ENCODE measurements at regions of chr20 and their contacts with region 1.

Region 1: GRCh38 chr20:36666181-36666740 is 20.3 kb upstream of the SLA2 start:
- DNase-seq: peak; percentile 15
- ATAC-seq: peak; percentile 40; the same call in 1 of the 2 replicates
- H3K4me3 ChIP-seq: no peak overlapping the region
- H3K27ac ChIP-seq: no peak overlapping the region
- H3K4me1 ChIP-seq: no peaks in the 10 kb centered on the region
- H3K27me3 ChIP-seq: no peaks in the 10 kb centered on the region
- CTCF ChIP-seq: no peak; the same call in 1 of the 2 replicates

Region 2: DNA sequence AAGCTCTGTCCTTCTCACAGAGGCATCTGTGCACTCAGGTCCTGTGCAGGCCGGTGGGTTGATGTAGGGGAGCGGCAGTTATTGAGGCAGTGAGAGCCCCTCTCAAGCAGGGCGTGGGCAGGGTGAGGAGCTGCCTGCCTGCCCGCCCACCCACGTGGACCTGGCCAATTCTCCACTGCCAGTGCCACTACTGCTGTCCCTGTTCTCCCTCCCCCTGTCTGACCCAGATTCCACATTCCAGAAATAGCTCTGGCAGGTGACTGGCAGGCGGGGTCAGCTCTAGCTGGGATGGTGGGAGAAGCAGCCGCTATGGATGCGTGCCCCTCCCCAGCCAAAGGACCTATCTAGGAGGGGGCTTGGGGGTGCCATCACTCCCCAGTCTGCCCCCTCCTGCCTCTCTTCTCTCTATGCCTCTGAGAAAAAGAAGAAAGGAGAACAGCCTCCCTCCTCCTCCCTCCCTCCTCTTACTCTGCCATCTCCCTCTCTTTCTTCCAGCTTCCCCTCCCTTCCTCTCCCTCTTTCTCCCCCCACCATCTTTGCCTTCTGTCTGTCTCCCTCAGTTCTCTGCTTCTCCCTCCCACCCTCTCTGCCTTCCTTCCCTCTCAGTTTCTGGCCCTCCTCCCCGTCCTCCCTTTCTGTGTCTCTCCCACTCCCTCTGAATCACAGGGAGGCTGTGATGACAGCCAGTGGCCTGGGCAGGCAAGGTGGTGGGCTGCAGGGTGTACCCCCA is 211.4 kb before region 1 on chr20:
- CTCF ChIA-PET with region 1: no interaction called
- POLR2A ChIA-PET with region 1: interaction called, 12 read pairs
- intact Hi-C with region 1: no loop called
- DNase-seq: peak; percentile 17
- ATAC-seq: peak; percentile 59
- H3K4me3 ChIP-seq: no peak overlapping the region
- H3K27ac ChIP-seq: no peak overlapping the region
- H3K4me1 ChIP-seq: no peaks in the 10 kb centered on the region
- H3K27me3 ChIP-seq: no peaks in the 10 kb centered on the region
- CTCF ChIP-seq: no peak

Region 3: GRCh38 chr20:36613974-36614373 is 52.3 kb before region 1 on chr20:
- CTCF ChIA-PET with region 1: interaction called, 10 read pairs
- POLR2A ChIA-PET with region 1: no interaction called
- intact Hi-C with region 1: no loop called
- DNase-seq: peak; percentile 71
- ATAC-seq: peak; percentile 77
- H3K4me3 ChIP-seq: no peak overlapping the region
- H3K27ac ChIP-seq: no peak overlapping the region
- H3K4me1 ChIP-seq: peaks cover 12% of the 10 kb centered on the region; the same call in 1 of the 2 replicates
- H3K27me3 ChIP-seq: no peaks in the 10 kb centered on the region
- CTCF ChIP-seq: no peak

Region 4: GRCh38 chr20:36642136-36642535 is 24.1 kb before region 1 on chr20:
- CTCF ChIA-PET with region 1: no interaction called
- POLR2A ChIA-PET with region 1: no interaction called
- intact Hi-C with region 1: no loop called
- DNase-seq: no peak
- ATAC-seq: no peak
- H3K4me3 ChIP-seq: no peak overlapping the region
- H3K27ac ChIP-seq: peak overlapping the region; percentile 64
- H3K4me1 ChIP-seq: peaks cover 12% of the 10 kb centered on the region
- H3K27me3 ChIP-seq: no peaks in the 10 kb centered on the region
- CTCF ChIP-seq: no peak

Region 5: DNA sequence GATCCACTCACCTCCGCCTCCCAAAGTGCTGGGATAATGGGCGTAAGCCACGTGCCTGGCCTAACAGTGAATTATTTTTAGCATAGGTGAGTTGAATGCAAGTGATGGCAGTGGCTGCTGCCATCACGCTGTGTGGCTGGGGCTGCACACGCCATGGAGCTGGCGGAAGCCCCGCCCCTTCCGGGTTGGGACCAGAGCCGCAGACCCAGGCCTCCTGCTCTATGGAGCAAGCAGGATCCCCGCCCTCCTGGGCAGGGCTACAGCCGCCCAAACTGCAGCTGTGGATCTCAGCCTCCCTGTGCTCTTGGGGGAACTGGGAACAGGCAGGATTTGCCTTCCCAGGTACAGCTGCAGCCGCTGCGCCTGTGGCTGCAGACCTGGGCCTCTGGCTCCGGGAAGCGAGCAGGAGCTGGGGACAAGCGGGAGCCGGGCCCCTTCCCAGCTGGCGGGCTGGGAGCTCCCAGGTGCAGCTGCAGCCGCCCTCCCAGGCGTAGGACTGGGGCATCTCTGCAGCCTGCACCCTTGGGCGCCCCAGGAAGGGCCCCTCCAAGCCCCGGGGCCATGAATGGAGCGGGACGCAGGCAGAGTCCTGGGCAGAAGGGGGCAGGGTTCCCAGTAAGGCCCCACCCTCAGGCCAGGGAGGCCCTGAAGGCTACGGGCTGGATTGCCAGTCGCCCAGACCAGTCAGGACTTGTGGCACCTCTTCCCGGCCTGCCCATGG is 10.6 kb after region 1 on chr20:
- CTCF ChIA-PET with region 1: no interaction called
- POLR2A ChIA-PET with region 1: no interaction called
- intact Hi-C with region 1: no loop called
- DNase-seq: no peak
- ATAC-seq: no peak
- H3K4me3 ChIP-seq: no peak overlapping the region
- H3K27ac ChIP-seq: no peak overlapping the region
- H3K4me1 ChIP-seq: no peaks in the 10 kb centered on the region
- H3K27me3 ChIP-seq: no peaks in the 10 kb centered on the region
- CTCF ChIP-seq: no peak

Region 6: GRCh38 chr20:36745927-36746659 is 79.8 kb after region 1 on chr20 and contains the start of gene NDRG3:
- CTCF ChIA-PET with region 1: no interaction called
- POLR2A ChIA-PET with region 1: interaction called, 12 read pairs
- intact Hi-C with region 1: no loop called
- DNase-seq: peak; percentile 94
- ATAC-seq: peak; percentile 94
- H3K4me3 ChIP-seq: peak within 1 kb of the TSS; percentile 86
- H3K27ac ChIP-seq: peak within 1 kb of the TSS; percentile 34
- H3K4me1 ChIP-seq: peaks cover 7% of the 10 kb centered on the region; the same call in 1 of the 2 replicates
- H3K27me3 ChIP-seq: no peaks in the 10 kb centered on the region
- CTCF ChIP-seq: no peak
- total RNA-seq, gene NDRG3: 27.0 and 30.1 TPM in 2 replicates

Region 7: GRCh38 chr20:36754656-36755222 is 88.5 kb after region 1 on chr20:
- CTCF ChIA-PET with region 1: interaction called, 4 read pairs
- POLR2A ChIA-PET with region 1: interaction called, 12 read pairs
- intact Hi-C with region 1: loop called (anchors 1 kb)
- DNase-seq: peak; percentile 79
- ATAC-seq: peak; percentile 98
- H3K4me3 ChIP-seq: no peak overlapping the region
- H3K27ac ChIP-seq: no peak overlapping the region
- H3K4me1 ChIP-seq: no peaks in the 10 kb centered on the region
- H3K27me3 ChIP-seq: no peaks in the 10 kb centered on the region
- CTCF ChIP-seq: peak; percentile 87

Region 8: DNA sequence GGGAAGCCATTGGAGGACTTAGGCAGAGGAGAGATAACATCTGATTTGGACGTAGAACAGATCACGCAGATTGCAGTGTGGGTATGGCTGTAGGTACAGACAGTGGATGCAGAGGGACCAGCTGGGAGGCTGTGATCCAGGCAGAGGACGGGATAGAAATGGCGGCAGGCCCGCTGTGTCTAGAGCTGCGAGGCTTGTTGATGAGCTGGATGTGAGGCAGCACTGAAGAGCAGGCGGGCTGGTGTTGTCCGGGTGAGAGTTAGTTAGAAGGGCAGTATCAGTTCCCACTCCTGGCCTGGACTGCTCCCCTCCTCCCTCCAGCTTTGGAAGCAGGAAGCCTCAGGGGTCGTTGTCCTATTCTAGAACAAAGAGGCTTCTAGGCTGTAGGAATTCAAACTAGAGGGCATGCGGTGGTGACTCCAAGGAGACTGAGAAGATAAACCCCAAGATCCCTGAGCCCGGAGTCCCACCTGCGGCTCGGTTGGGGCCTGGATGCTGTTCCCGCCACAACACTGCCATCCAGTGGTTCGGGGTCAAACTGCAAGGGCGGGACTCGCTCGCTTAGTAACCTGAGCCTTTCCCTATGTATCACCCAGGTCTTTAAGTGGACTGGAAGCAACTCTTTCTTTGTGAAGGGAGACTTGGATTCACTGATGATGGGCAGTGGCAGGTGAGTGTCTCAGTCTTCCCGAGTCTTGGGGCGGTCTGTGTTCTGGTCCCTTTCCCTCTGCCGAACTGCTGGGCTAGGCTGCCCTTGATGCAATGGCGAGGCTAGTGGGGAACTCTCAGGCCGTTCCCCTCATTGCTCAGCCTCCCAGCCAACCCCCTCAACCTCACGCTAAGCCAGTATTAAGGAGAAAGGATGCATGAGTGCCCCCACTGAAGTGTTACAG is 220.8 kb after region 1 on chr20:
- CTCF ChIA-PET with region 1: no interaction called
- POLR2A ChIA-PET with region 1: no interaction called
- intact Hi-C with region 1: loop called (anchors 2 kb)
- DNase-seq: peak; percentile 94
- ATAC-seq: peak; percentile 96
- H3K4me3 ChIP-seq: peak overlapping the region; percentile 29; the same call in 1 of the 2 replicates
- H3K27ac ChIP-seq: no peak overlapping the region
- H3K4me1 ChIP-seq: peaks cover 4% of the 10 kb centered on the region; the same call in 1 of the 2 replicates
- H3K27me3 ChIP-seq: no peaks in the 10 kb centered on the region
- CTCF ChIP-seq: peak; percentile 94

Region 9: GRCh38 chr20:38412877-38413577 is 1746.8 kb after region 1 on chr20:
- CTCF ChIA-PET with region 1: no interaction called
- POLR2A ChIA-PET with region 1: no interaction called
- intact Hi-C with region 1: no loop called
- DNase-seq: no peak
- ATAC-seq: no peak
- H3K4me3 ChIP-seq: no peak overlapping the region
- H3K27ac ChIP-seq: no peak overlapping the region
- H3K4me1 ChIP-seq: no peaks in the 10 kb centered on the region
- H3K27me3 ChIP-seq: no peaks in the 10 kb centered on the region
- CTCF ChIP-seq: no peak